ENCODE measurements at regions of chr2 and their contacts with region 1.

Region 1: GRCh38 chr2:85561317-85561979 is at the start of gene GGCX:
- DNase-seq: peak; percentile 90 to 95 (median 94)
- H3K4me3 ChIP-seq: peak within 1 kb of the TSS; percentile 62 to 97 (median 86)
- H3K27ac ChIP-seq: peak within 1 kb of the TSS; percentile 57 to 93 (median 85)
- H3K27me3 ChIP-seq: no peaks in the 10 kb centered on the region
- CTCF ChIP-seq: peak in 53 of 56 donors; percentile 25 to 76 (median 60)
- total RNA-seq, gene GGCX: 24.6 to 53.8 (median 36.1) TPM

Region 2: GRCh38 chr2:85589982-85590791 is 28.7 kb after region 1 on chr2:
- intact Hi-C with region 1: loop called (anchors 2 kb)
- DNase-seq: no peak
- H3K4me3 ChIP-seq: no peak overlapping the region
- H3K27ac ChIP-seq: peak overlapping the region in 53 of 59 donors; percentile 2 to 87 (median 70)
- H3K27me3 ChIP-seq: no peaks in the 10 kb centered on the region
- CTCF ChIP-seq: no peak

Region 3: GRCh38 chr2:85595301-85596025 is 34.0 kb after region 1 on chr2 and contains the start of gene RNF181:
- intact Hi-C with region 1: loop called (anchors 2 kb)
- DNase-seq: peak; percentile 94 to 100 (median 99)
- H3K4me3 ChIP-seq: peak within 1 kb of the TSS; percentile 57 to 100 (median 88)
- H3K27ac ChIP-seq: peak within 1 kb of the TSS; percentile 68 to 98 (median 93)
- H3K27me3 ChIP-seq: no peaks in the 10 kb centered on the region
- CTCF ChIP-seq: peak in 15 of 56 donors; percentile 7 to 37 (median 17)
- total RNA-seq, gene RNF181: 46.9 to 93.7 (median 73.1) TPM

Region 4: DNA sequence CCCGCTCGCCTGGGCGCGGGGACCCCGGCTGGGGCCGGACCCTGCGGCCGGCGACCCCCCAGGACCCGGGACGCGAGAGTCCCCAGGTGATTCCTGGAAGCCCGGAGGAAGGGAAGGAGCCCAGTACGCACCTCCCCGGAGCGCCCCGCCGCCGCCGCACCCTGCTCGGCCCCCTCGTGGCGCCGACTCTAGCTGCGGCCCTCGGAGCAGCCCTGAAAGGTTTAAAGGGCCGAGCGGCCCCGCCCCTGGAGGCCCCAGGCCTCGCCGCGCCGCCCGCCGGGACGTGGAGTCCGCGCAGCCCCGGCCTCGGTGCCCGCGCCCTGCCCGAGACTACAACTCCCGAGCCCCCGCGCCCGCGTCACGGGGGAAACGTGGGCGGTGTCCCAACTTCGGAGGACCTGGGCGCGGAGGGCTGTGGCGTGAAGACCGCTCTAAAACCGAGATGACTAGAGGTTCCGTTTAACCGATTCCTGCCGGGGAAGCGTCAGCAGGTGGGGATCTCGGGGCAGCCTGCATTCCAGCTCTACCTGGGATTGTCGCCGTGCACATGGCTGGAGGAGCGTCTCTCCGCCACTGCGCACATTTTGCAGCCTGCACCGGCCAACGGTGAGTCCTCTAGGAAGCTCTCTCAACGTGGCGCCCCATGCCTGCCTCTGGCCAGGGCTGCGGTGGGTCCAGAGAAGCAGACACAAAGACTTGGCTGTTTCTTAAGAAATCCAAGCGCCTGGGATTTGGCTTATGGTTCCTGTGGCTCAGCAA is 41.2 kb after region 1 on chr2 and contains the start of gene TMEM150A:
- intact Hi-C with region 1: loop called in 1 of 2 experiments (anchors 2 kb)
- DNase-seq: peak; percentile 87 to 97 (median 94)
- H3K4me3 ChIP-seq: peak within 1 kb of the TSS; percentile 66 to 96 (median 84)
- H3K27ac ChIP-seq: peak within 1 kb of the TSS; percentile 18 to 93 (median 84)
- H3K27me3 ChIP-seq: no peaks in the 10 kb centered on the region
- CTCF ChIP-seq: peak in 48 of 56 donors; percentile 8 to 69 (median 41)
- total RNA-seq, gene TMEM150A: 5.8 to 22.7 (median 10.9) TPM